T-cell (primary cell): ENCODE measurements at regions of chr17 and their contacts with region 1.

Region 1: DNA sequence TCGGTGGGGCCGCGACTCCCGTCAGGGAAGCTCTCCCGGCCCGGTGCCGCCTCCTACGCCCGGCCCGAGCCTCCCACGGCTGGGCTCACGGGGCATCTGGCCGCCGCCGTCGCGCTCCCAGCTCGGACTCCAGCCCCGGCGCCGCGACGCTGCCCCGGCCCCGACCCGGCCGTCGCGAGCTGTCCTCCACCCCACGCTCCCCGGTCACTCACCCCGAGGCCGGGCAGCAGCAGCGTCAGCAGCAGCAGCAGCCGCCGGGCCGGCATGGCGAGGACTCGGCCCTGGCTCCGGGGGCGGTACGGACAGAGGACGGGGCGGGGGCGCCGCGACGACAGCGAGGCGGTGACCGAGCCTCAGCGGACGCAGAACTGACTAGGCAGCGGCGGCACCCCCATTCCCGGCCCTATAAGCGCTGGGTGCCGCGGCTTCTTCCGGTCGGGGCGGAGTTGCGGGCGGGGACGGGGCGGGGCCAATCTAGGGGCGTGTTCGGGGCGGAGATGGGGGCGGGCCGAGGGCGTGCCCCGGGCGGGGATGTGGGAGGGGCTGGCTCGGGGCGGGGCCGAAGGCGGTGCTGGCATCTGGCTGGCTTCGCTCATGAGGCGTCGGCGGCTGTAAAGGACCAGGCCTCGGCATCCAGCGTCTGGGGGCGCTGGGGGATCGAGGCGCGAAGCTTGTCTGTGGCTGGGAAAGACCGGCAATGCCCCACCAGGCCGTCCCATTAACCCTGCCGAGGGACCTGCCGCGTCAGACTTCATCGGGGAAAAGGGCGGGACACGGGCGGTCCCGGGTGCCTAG is at the start of gene ERN1:
- DNase-seq: peak; percentile 78 to 94 (median 87)
- ATAC-seq: peak; percentile 86 to 90 (median 88)
- H3K4me3 ChIP-seq: peak within 1 kb of the TSS; percentile 79 to 85
- H3K4me3 Mint-ChIP-seq: peak within 1 kb of the TSS; percentile 88 to 94 (median 93)
- H3K27ac ChIP-seq: peak within 1 kb of the TSS; percentile 95
- H3K27ac Mint-ChIP-seq: peak within 1 kb of the TSS; percentile 94 to 95
- H3K4me1 ChIP-seq: peaks cover 17 to 34% of the 10 kb centered on the region in 2 experiments
- H3K4me1 Mint-ChIP-seq: peaks cover 44 to 57% (median 49%) of the 10 kb centered on the region in 3 donors
- H3K27me3 ChIP-seq: no peaks in the 10 kb centered on the region
- H3K27me3 Mint-ChIP-seq: no peaks in the 10 kb centered on the region
- total RNA-seq, gene ERN1: 71.2 to 146 (median 112) TPM

Region 2: GRCh38 chr17:62933501-62934385 is 1196.2 kb before region 1 on chr17:
- CTCF ChIA-PET with region 1: no interaction called
- POLR2A ChIA-PET with region 1: no interaction called
- DNase-seq: no peak
- ATAC-seq: no peak
- H3K4me3 ChIP-seq: no peak overlapping the region
- H3K4me3 Mint-ChIP-seq: no peak overlapping the region
- H3K27ac ChIP-seq: no peak overlapping the region
- H3K27ac Mint-ChIP-seq: no peak overlapping the region
- H3K4me1 ChIP-seq: no peaks in the 10 kb centered on the region
- H3K4me1 Mint-ChIP-seq: no peaks in the 10 kb centered on the region
- H3K27me3 ChIP-seq: peaks cover 2 to 15% of the 10 kb centered on the region in 2 experiments
- H3K27me3 Mint-ChIP-seq: peaks cover 43 to 48% of the 10 kb centered on the region in 2 donors

Region 3: GRCh38 chr17:63904316-63904715 is 225.6 kb before region 1 on chr17:
- CTCF ChIA-PET with region 1: interaction called, 4 to 10 read pairs
- POLR2A ChIA-PET with region 1: interaction called in 1 of 2 experiments, 6 read pairs
- DNase-seq: no peak
- ATAC-seq: no peak
- H3K4me3 ChIP-seq: no peak overlapping the region
- H3K4me3 Mint-ChIP-seq: no peak overlapping the region
- H3K27ac ChIP-seq: no peak overlapping the region
- H3K27ac Mint-ChIP-seq: no peak overlapping the region
- H3K4me1 ChIP-seq: no peaks in the 10 kb centered on the region
- H3K4me1 Mint-ChIP-seq: peaks cover 2 to 5% (median 3%) of the 10 kb centered on the region in 3 donors
- H3K27me3 ChIP-seq: peaks cover 0 to 5% of the 10 kb centered on the region in 2 experiments
- H3K27me3 Mint-ChIP-seq: peaks cover 0 to 3% of the 10 kb centered on the region in 2 donors

Region 4: DNA sequence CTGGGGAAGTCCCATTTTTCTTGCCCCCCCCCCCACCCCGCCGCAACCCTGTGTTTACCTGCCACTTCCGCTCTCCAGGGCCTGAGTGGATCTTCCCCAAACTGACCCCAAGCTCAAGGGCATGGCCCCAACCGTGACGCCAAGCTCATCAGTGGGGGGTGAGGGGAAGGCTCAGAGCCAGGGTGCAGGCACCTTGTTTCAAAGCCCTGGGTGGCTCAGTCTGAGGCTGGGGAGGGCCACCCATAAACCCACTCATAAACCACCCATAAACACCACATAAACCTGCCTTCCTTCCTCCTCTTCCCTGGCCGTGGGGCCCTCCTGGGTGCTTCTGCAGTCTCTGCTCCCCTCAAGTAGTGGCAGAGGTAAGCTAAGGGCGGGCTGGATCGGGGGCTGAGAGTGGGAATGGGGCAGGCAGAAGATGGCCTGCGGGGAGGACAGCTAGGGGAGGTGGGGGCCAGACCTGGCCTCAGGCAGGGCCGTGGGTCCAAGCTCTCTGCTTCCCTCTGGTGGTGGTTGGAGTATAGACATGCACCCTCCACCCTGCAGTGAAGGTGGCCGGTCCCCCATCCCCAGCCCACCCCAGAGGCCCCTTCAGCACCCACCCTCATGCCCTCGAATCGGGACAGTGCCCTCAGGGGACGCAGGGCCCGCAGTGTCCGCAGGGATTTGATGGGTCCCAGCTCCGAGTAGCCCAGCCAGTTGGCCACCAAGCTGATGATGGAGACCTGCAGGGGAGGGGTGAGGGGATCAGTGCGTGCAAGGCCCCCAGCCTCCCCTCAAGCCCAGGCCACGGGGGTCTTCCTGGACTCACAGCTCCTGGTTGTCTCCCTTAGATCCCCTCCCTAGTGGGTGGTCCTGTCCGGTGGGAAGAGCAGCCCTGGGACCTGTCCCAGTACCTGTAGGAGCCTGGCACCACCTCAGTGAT is 183.3 kb before region 1 on chr17:
- CTCF ChIA-PET with region 1: interaction called in 1 of 2 experiments, 13 read pairs
- POLR2A ChIA-PET with region 1: no interaction called
- DNase-seq: peak in 32 of 35 experiments; percentile 6 to 79 (median 40)
- ATAC-seq: peak; percentile 71 to 86 (median 82)
- H3K4me3 ChIP-seq: peak overlapping the region; percentile 2 to 18
- H3K4me3 Mint-ChIP-seq: peak overlapping the region; percentile 51 to 70 (median 59)
- H3K27ac ChIP-seq: no peak overlapping the region
- H3K27ac Mint-ChIP-seq: no peak overlapping the region
- H3K4me1 ChIP-seq: peaks cover 3 to 28% of the 10 kb centered on the region in 2 experiments
- H3K4me1 Mint-ChIP-seq: peaks cover 15 to 27% (median 17%) of the 10 kb centered on the region in 3 donors
- H3K27me3 ChIP-seq: peaks cover 0 to 7% of the 10 kb centered on the region in 2 experiments
- H3K27me3 Mint-ChIP-seq: no peaks in the 10 kb centered on the region

Region 5: GRCh38 chr17:64041912-64042311 is 88.0 kb before region 1 on chr17:
- CTCF ChIA-PET with region 1: interaction called, 12 to 13 read pairs
- POLR2A ChIA-PET with region 1: no interaction called
- DNase-seq: no peak
- ATAC-seq: peak in 1 of 4 experiments; percentile 60
- H3K4me3 ChIP-seq: no peak overlapping the region
- H3K4me3 Mint-ChIP-seq: no peak overlapping the region
- H3K27ac ChIP-seq: peak overlapping the region; percentile 29
- H3K27ac Mint-ChIP-seq: peak overlapping the region; percentile 2 to 33
- H3K4me1 ChIP-seq: no peaks in the 10 kb centered on the region
- H3K4me1 Mint-ChIP-seq: peaks cover 0 to 20% (median 8%) of the 10 kb centered on the region in 3 donors
- H3K27me3 ChIP-seq: no peaks in the 10 kb centered on the region
- H3K27me3 Mint-ChIP-seq: no peaks in the 10 kb centered on the region

Region 6: GRCh38 chr17:64063766-64064224 is 66.2 kb before region 1 on chr17:
- CTCF ChIA-PET with region 1: interaction called, 25 to 107 read pairs
- POLR2A ChIA-PET with region 1: interaction called in 1 of 2 experiments, 3 read pairs
- DNase-seq: peak; percentile 22 to 71 (median 53)
- ATAC-seq: peak; percentile 49 to 76 (median 62)
- H3K4me3 ChIP-seq: peak overlapping the region in 1 of 2 donors; percentile 51
- H3K4me3 Mint-ChIP-seq: peak overlapping the region in 2 of 3 donors; percentile 66 to 86
- H3K27ac ChIP-seq: peak overlapping the region; percentile 68
- H3K27ac Mint-ChIP-seq: peak overlapping the region in 1 of 2 donors; percentile 96
- H3K4me1 ChIP-seq: peaks cover 8 to 80% of the 10 kb centered on the region in 2 experiments
- H3K4me1 Mint-ChIP-seq: peaks cover 6 to 98% (median 69%) of the 10 kb centered on the region in 3 donors
- H3K27me3 ChIP-seq: no peaks in the 10 kb centered on the region
- H3K27me3 Mint-ChIP-seq: no peaks in the 10 kb centered on the region

Region 7: GRCh38 chr17:64145757-64146417 is 15.9 kb after region 1 on chr17:
- CTCF ChIA-PET with region 1: interaction called, 9 to 39 read pairs
- POLR2A ChIA-PET with region 1: interaction called, 4 to 15 read pairs
- DNase-seq: peak; percentile 90 to 98 (median 95)
- ATAC-seq: peak; percentile 91 to 95 (median 94)
- H3K4me3 ChIP-seq: peak overlapping the region; percentile 55 to 77
- H3K4me3 Mint-ChIP-seq: no peak overlapping the region
- H3K27ac ChIP-seq: peak overlapping the region; percentile 87
- H3K27ac Mint-ChIP-seq: no peak overlapping the region
- H3K4me1 ChIP-seq: peaks cover 14 to 18% of the 10 kb centered on the region in 2 experiments
- H3K4me1 Mint-ChIP-seq: peaks cover 24 to 28% (median 24%) of the 10 kb centered on the region in 3 donors
- H3K27me3 ChIP-seq: no peaks in the 10 kb centered on the region
- H3K27me3 Mint-ChIP-seq: no peaks in the 10 kb centered on the region